ENCODE measurements at regions of chr3 and their contacts with region 1.

Region 1: DNA sequence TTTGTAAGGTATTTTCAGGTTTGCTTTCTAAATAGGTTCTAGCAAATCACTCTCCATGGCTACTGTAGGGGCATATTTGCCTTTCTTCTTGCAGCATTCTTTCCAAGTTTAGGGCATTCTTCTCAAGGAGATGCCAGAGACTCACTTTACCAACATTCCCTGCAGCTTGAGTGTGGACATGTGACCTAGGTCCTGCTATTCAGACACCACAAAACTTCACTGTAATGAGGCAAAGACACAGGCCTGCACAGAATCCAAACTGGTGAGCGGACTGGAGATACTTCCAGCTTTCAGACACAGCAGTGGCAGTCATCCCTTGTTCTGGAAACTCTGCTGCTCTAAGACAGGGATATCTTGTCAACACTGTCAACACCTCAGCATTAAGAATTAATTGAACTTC is 146.4 kb upstream of the PFN2 start:
- DNase-seq: no peak
- H3K4me3 ChIP-seq: no peak overlapping the region
- H3K27ac ChIP-seq: no peak overlapping the region
- H3K4me1 ChIP-seq: no peaks in the 10 kb centered on the region
- H3K27me3 ChIP-seq: no peaks in the 10 kb centered on the region
- CTCF ChIP-seq: no peak

Region 2: DNA sequence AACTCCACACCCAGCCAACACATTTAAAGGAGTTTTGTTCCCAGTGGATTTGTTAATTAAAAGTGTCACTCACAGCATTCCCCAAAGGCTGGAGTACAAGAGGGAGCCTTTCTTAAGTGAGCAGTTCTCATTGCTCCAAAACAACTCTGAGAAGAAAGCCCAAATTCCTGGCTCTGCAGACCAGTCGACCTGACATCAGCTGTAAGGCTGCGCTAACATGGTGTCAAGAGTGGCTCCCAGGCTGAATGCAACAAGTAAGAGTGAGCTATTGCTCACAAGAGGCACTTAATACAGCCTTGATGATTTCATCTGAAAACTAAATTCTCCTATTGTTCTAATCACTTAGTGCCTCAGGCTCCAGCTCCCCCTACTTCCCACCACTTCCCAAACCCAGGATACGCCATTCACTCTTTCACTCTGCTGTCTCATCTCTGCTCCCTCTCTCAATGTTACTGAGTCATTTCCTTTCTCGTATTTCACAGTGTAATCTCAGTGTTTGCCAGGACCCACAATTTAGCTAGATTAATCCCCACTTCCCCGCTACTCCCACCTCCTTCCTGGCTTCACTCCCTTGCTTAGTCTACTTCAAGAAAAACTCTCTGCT is 541.0 kb before region 1 on chr3:
- CTCF ChIA-PET with region 1: no interaction called
- POLR2A ChIA-PET with region 1: no interaction called
- intact Hi-C with region 1: no loop called
- DNase-seq: peak; percentile 73 to 91
- H3K4me3 ChIP-seq: peak overlapping the region; percentile 35; the same call in 1 of the 2 replicates
- H3K27ac ChIP-seq: peak overlapping the region; percentile 98
- H3K4me1 ChIP-seq: peaks cover 89% of the 10 kb centered on the region
- H3K27me3 ChIP-seq: no peaks in the 10 kb centered on the region
- CTCF ChIP-seq: no peak

Region 3: DNA sequence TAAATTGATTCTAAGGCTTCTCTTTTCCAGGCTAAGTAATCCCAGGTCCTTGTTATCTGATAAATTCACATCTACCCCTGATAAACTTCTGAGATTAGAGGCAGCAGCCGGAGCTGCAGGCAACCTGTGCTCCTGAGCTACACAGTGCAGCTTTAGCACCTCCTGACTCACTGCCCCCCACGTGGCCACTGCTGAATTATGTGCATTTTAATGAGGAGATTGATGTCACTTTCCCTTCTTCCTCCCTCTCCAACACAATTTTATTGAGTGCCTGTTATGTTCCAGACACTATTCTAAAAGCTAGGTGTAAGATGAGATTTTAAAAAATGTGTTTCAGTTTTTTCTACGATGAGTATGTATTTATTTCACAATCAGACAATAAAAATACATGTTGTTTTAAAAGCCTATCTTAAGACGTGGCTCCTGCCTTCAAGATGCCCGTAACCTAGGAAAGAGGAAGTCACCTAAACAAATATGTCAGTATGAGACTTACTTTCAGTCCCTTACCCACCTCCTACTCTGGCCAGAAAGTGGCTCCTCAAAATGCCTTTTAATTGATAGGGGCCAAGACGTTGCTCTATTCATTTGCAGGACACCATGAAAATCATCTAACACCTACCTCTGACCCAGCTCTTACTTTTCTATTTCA is 15.1 kb after region 1 on chr3:
- CTCF ChIA-PET with region 1: interaction called, 14 read pairs
- POLR2A ChIA-PET with region 1: no interaction called
- intact Hi-C with region 1: no loop called
- DNase-seq: no peak
- H3K4me3 ChIP-seq: no peak overlapping the region
- H3K27ac ChIP-seq: no peak overlapping the region
- H3K4me1 ChIP-seq: no peaks in the 10 kb centered on the region
- H3K27me3 ChIP-seq: no peaks in the 10 kb centered on the region
- CTCF ChIP-seq: no peak

Region 4: GRCh38 chr3:150238998-150239619 is 122.0 kb after region 1 on chr3:
- CTCF ChIA-PET with region 1: interaction called, 10 read pairs
- POLR2A ChIA-PET with region 1: no interaction called
- intact Hi-C with region 1: no loop called
- DNase-seq: peak; percentile 36 to 41
- H3K4me3 ChIP-seq: peak overlapping the region; percentile 37; the same call in 1 of the 2 replicates
- H3K27ac ChIP-seq: peak overlapping the region; percentile 91
- H3K4me1 ChIP-seq: peaks cover 43% of the 10 kb centered on the region
- H3K27me3 ChIP-seq: no peaks in the 10 kb centered on the region
- CTCF ChIP-seq: peak; percentile 62

Measured in PC-9 (cell line).